BJ (cell line): ENCODE measurements at regions of chr3 and their contacts with region 1.

Region 1: DNA sequence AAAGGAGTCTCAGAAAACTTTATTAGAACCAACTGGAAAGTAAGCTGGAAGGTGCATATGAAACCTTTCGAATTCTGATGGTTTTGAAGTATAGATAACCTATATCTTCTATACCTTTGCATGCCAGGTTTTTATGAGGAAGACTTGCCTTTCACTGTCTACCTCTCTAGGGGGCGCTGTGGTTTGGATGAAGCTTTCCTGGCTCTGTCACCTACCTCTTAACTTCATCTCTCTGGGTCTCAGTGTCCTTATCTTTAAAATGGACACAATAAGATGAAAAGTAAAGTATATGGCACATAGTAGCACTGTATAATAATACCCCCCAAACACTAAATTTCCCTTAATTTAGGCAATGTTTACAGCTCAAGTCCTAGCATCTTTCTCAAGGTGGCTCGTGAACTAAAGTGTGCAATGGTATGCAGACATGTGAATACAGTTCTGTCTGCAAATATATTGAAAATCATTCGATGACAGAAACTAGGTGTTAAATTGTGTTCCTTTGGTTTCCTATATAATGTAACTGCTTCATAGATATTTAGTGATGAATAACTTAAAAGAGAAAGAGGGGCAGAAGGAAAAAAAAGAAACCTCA is 314.3 kb downstream of the CHST2 start:
- DNase-seq: no peak
- H3K4me3 ChIP-seq: no peak overlapping the region
- H3K27me3 ChIP-seq: no peaks in the 10 kb centered on the region
- CTCF ChIP-seq: peak; percentile 27; the same call in 1 of the 2 replicates

Region 2: GRCh38 chr3:143443851-143444331 is 10.0 kb after region 1 on chr3:
- CTCF ChIA-PET with region 1: interaction called, 10 read pairs
- POLR2A ChIA-PET with region 1: no interaction called
- DNase-seq: peak; percentile 83
- H3K4me3 ChIP-seq: no peak overlapping the region
- H3K27me3 ChIP-seq: no peaks in the 10 kb centered on the region
- CTCF ChIP-seq: no peak